ENCODE measurements at regions of chr1 and their contacts with region 1.

Region 1: GRCh38 chr1:54335755-54336108 is 70.5 kb downstream of the SSBP3 start:
- DNase-seq: no peak
- H3K4me3 ChIP-seq: no peak overlapping the region
- H3K27ac ChIP-seq: no peak overlapping the region
- H3K4me1 ChIP-seq: peaks cover 2 to 42% (median 26%) of the 10 kb centered on the region in 4 experiments
- H3K27me3 ChIP-seq: no peaks in the 10 kb centered on the region

Region 2: DNA sequence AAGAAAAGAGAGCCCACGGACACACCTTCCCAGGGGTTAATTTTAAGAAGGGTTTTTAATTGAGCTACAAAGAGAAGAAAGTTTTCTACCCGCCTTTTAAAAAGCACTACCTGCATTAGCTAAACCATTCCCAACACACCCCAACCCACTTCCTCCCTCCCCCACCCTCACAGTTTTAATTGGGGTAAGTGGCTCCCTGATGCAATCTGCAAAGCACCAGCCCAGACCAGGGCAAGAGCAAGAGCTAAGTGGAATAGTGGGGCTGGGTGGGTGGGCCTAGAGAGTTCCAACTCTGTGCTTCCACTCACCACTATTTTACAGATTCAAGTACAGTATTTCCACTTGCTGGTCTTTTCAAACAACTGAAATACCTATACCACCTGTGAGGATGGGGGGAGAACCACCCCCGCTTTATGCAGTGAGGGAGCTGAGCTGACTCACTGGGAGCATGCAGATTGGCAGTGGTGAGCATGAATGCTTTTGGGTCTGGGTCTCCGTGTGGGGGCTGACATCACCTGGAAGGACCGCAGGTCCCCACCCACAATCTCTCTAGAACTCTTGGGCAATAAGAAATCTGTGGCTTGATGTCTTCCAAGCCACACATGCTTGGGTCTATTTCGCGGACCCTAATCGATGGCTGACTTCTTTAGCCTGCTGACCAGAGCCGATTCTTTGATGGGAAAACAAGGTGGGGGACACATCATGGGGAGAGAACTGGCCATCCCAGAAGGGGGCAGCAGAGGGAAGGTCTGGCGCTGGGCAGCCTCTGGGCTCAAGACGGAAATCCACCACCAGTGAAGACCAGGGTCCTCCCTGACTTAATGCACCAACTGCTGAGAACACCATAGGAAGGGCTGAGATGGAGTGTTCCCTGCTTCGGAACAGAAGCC is 25.0 kb before region 1 on chr1:
- CTCF ChIA-PET with region 1: interaction called, 10 read pairs
- POLR2A ChIA-PET with region 1: no interaction called
- DNase-seq: peak in 1 of 3 donors; percentile 33
- H3K4me3 ChIP-seq: no peak overlapping the region
- H3K27ac ChIP-seq: no peak overlapping the region
- H3K4me1 ChIP-seq: peaks cover 0 to 25% (median 11%) of the 10 kb centered on the region in 4 experiments
- H3K27me3 ChIP-seq: no peaks in the 10 kb centered on the region

Region 3: DNA sequence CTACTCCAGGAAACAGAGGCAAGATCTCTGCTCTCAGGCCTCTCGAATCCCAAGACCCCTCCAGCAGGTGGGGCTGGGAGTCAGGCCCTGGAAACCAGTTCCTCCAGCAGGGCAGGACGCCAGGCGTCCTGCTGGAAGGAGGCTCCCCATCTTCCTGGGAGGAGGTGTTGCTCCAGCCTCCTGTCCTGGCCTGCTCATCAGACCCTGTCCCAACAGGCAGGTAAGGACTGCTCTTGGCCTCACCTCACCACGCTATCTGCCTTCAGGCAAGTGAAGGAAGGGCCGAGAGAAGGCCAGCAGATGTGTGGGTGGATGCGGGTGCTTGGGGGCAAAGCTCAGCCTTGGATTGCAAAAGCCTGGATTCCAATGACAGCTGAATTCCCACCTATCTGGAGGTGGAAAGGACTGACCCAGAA is 12.4 kb before region 1 on chr1:
- CTCF ChIA-PET with region 1: interaction called, 10 read pairs
- POLR2A ChIA-PET with region 1: no interaction called
- DNase-seq: no peak
- H3K4me3 ChIP-seq: no peak overlapping the region
- H3K27ac ChIP-seq: peak overlapping the region in 1 of 2 experiments; percentile 22
- H3K4me1 ChIP-seq: peaks cover 0 to 2% (median 0%) of the 10 kb centered on the region in 4 experiments
- H3K27me3 ChIP-seq: no peaks in the 10 kb centered on the region

Region 4: DNA sequence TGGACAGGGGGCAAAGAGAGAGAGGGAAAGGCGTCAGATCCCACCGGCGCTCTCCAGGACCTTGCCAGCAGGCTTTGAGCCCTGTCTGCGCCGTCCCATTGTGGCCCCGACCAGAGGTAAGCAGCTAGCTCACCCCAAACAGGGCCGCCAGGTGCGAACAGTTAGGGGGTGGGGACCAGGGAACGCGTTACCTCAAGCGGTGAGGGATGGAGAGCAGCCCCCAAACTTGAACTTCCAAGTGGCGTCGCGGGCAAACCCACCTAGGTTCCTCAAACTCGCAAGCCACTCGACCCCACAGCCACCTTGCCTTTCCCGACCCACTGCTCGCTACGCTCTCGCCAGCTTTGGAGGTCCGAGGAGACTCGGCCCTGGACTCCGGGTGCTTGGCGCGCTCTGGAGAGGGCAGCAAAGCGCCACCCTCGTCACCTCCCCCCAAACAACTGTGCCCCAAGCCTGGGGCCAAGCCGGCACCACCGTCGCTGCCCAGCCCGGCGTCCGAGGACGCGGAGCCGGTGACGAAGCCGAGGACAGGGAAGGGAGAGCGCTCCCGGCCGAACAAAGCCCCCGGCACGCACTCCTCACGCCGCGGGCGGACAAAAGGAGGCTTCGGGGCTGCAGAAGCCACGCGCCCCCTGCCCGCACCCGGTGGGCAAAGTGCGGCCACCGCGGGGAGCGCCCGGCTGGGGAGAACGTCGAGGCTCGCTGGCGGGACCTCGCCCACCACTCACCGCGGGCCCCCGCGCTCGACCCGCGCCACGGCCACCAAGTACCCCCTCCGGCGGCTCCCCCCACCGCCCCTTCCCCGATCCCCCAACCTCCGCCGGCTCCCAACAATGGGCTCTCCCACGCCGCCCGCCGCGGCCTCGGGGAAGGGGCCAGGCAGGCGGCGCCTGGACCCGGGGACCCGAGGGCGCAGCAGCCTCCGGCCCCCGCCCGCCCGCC is 69.5 kb after region 1 on chr1:
- CTCF ChIA-PET with region 1: no interaction called
- POLR2A ChIA-PET with region 1: no interaction called
- DNase-seq: peak in 1 of 3 donors; percentile 31
- H3K4me3 ChIP-seq: peak overlapping the region; percentile 54 to 92 (median 85)
- H3K27ac ChIP-seq: peak overlapping the region in 1 of 2 experiments; percentile 43
- H3K4me1 ChIP-seq: peaks cover 6 to 71% (median 60%) of the 10 kb centered on the region in 4 experiments
- H3K27me3 ChIP-seq: no peaks in the 10 kb centered on the region

Measured in common myeloid progenitor, CD34-positive (primary cell).